ENCODE measurements at regions of chr12 and their contacts with region 1.

Region 1: DNA sequence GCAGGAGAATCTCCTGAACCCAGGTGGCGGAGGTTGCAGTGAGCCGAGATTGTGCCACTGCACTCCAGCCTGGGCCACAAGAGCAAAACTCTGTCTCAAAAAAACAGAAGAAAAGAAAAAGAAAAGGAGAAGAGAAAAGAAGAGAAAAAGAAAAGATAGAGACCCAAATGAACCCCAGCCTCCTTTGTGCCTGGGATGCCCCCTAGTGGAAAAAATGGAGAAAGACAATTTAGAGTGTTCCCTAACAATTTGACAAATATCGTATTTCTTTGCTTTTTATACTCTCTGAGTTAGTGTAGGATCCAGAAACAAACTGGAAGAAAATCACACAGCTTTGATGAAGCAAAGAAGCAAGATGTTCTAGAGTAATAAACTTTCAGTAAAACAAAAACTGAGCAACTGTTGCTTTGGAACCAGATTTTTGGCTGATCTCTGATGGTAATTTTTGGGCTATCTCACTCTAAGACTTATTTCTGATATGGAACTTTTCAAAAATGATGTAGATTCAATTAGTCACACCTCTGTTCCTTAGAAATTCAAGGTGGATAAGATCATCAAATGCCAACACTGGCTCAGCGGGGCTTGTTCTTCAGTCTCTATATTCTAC is 18.6 kb upstream of the PRKAB1 start:
- DNase-seq: peak; percentile 68
- H3K4me3 ChIP-seq: no peak overlapping the region; a peak in 1 of 4 replicates
- H3K27ac ChIP-seq: no peak overlapping the region
- H3K4me1 ChIP-seq: no peaks in the 10 kb centered on the region
- H3K27me3 ChIP-seq: no peaks in the 10 kb centered on the region
- CTCF ChIP-seq: peak; percentile 89
- EP300 ChIP-seq: no peak
- RAD21 ChIP-seq: peak; percentile 73

Region 2: GRCh38 chr12:119631930-119632678 is 17.2 kb before region 1 on chr12:
- CTCF ChIA-PET with region 1: interaction called, 18 read pairs
- POLR2A ChIA-PET with region 1: no interaction called
- DNase-seq: no peak
- H3K4me3 ChIP-seq: no peak overlapping the region
- H3K27ac ChIP-seq: no peak overlapping the region
- H3K4me1 ChIP-seq: no peaks in the 10 kb centered on the region
- H3K27me3 ChIP-seq: no peaks in the 10 kb centered on the region
- CTCF ChIP-seq: no peak
- EP300 ChIP-seq: no peak
- RAD21 ChIP-seq: no peak

Region 3: DNA sequence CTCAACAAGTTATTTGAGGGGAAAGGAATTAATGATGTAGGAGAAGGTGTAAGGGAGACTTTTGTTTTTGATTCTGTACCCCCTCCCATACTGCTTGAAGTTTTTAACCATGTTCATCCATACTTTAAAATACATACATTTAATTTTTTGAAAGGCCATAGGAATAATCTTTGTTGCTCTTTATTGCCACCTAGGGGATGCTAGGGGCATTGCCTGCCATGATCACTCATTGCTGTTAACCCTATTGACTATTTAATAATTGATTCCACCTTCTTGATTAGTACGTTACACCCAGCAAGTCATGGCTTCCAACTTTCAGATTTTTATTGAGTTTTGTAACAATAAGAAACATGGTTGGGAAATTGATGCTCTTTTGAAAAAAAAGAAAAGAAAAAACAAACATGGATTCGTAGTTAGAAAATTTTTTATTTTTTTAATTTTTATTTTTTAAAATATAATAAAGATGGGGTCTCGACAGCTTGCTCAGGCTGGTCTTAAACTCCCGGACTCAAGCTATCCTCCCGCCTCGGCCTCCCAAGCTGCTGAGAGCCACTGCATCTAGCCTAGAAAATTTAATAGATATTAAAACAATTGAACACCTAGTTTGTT is 10.1 kb after region 1 on chr12:
- CTCF ChIA-PET with region 1: interaction called, 13 read pairs
- POLR2A ChIA-PET with region 1: no interaction called
- DNase-seq: peak; percentile 69
- H3K4me3 ChIP-seq: no peak overlapping the region; a peak in 1 of 4 replicates
- H3K27ac ChIP-seq: no peak overlapping the region
- H3K4me1 ChIP-seq: no peaks in the 10 kb centered on the region
- H3K27me3 ChIP-seq: no peaks in the 10 kb centered on the region
- CTCF ChIP-seq: peak; percentile 93
- EP300 ChIP-seq: no peak
- RAD21 ChIP-seq: peak; percentile 55

Region 4: DNA sequence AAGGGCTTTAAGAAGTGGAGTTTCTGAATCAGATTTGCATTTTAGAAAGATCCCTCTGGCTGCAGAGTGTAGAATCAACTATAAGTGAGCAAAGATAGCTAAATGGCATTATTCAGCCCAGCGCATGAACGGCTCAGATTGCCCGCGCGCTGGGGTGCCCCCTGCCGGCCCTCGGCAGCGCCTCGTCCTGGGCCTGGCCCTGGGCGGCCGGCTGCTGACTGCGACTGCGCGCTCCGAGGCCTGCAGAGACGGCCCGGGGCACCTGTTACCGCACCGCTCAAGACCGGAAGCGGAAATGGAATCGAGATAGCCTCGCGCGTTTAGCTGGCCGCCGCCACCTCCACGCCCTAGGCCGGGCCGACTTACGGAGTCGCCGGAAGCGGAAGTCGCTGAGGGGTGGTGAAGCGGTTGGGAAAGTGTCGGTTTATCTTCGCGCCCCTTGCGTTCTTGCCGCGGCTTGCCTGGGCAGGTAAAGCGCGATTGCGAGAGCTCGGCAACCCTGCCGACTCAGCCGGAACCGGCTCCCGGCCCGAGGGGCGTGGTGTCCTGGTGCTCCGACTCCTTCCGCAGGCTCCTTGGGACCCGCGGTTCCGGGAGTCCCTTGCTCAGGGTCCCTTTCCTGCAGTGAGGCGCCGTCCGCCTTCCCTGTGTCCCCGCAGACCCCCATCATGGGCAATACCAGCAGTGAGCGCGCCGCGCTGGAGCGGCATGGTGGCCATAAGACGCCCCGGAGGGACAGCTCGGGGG is 18.4 kb after region 1 on chr12 and contains the start of gene PRKAB1:
- CTCF ChIA-PET with region 1: interaction called, 11 read pairs
- POLR2A ChIA-PET with region 1: no interaction called
- DNase-seq: peak; percentile 98
- H3K4me3 ChIP-seq: peak within 1 kb of the TSS; percentile 84 to 99
- H3K27ac ChIP-seq: peak within 1 kb of the TSS; percentile 76 to 94
- H3K4me1 ChIP-seq: peaks cover 6 to 7% of the 10 kb centered on the region in 2 experiments; a peak in 3 of 4 replicates
- H3K27me3 ChIP-seq: no peaks in the 10 kb centered on the region
- CTCF ChIP-seq: peak; percentile 94
- EP300 ChIP-seq: no peak; a peak in 1 of 4 replicates
- RAD21 ChIP-seq: peak; percentile 55
- polyA plus RNA-seq, gene PRKAB1: 28.9 and 41.8 TPM in 2 replicates

Measured in SK-N-SH (cell line).